Mucosa of descending colon (tissue), 3 donors: ENCODE measurements at regions of chr17 and their contacts with region 1.

Region 1: DNA sequence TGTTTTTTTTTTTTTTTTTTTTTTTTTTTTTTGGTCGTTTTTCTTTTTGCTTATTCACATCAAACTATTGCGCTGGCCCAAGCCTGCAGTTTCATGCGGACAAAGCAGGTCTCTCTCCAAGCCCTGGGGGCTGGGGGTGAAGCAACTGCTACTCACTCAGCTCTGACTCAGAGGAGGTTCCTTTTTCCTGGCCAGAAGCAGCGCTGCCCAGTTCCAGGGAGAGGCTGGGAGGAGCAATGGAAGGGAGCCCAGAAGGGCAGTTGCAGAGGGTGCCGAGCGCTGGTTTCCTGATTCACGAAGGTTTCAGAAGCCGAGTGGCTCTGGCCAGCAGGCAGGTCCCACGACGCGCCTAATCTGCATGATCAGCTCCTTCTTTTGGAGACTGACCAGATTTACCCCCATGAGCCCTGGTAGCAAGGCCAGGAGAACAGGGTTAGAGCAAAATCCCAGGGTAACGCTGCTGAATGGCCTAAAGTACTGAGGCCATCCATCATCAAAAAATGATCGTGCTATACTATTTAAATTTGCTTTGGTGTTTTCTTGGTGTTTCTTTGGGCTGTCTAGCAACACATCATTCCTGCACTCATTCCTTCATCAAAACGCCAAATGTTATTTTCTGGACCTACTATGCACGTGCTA is 144.7 kb upstream of the SOX9 start:
- DNase-seq: peak; percentile 82 to 85 (median 85)
- ATAC-seq: peak; percentile 89
- H3K4me3 ChIP-seq: no peak overlapping the region
- H3K4me1 ChIP-seq: peaks cover 23% of the 10 kb centered on the region
- CTCF ChIP-seq: no peak

Region 2: GRCh38 chr17:72030067-72030899 is 54.2 kb after region 1 on chr17:
- intact Hi-C with region 1: loop called in 1 of 2 experiments (anchors 10 kb)
- DNase-seq: peak in 2 of 3 donors; percentile 26 to 37
- ATAC-seq: peak; percentile 86
- H3K4me3 ChIP-seq: no peak overlapping the region
- H3K4me1 ChIP-seq: no peaks in the 10 kb centered on the region
- CTCF ChIP-seq: peak; percentile 14